ENCODE measurements at regions of chr3 and their contacts with region 1.

Region 1: GRCh38 chr3:184174646-184175492 is at the start of gene AP2M1:
- DNase-seq: peak; percentile 99 to 100
- H3K4me3 ChIP-seq: peak within 1 kb of the TSS; percentile 91
- H3K27ac ChIP-seq: peak within 1 kb of the TSS; percentile 32
- H3K4me1 ChIP-seq: peaks cover 20% of the 10 kb centered on the region
- H3K27me3 ChIP-seq: no peaks in the 10 kb centered on the region
- CTCF ChIP-seq: no peak
- total RNA-seq, gene AP2M1: 586 and 606 TPM in 2 replicates

Region 2: GRCh38 chr3:183966251-183966801 is 208.5 kb before region 1 on chr3:
- CTCF ChIA-PET with region 1: no interaction called
- POLR2A ChIA-PET with region 1: no interaction called
- intact Hi-C with region 1: loop called (anchors 2 kb)
- DNase-seq: peak; percentile 83 to 98
- H3K4me3 ChIP-seq: peak overlapping the region; percentile 27
- H3K27ac ChIP-seq: peak overlapping the region; percentile 99
- H3K4me1 ChIP-seq: peaks cover 72% of the 10 kb centered on the region
- H3K27me3 ChIP-seq: no peaks in the 10 kb centered on the region
- CTCF ChIP-seq: no peak

Region 3: DNA sequence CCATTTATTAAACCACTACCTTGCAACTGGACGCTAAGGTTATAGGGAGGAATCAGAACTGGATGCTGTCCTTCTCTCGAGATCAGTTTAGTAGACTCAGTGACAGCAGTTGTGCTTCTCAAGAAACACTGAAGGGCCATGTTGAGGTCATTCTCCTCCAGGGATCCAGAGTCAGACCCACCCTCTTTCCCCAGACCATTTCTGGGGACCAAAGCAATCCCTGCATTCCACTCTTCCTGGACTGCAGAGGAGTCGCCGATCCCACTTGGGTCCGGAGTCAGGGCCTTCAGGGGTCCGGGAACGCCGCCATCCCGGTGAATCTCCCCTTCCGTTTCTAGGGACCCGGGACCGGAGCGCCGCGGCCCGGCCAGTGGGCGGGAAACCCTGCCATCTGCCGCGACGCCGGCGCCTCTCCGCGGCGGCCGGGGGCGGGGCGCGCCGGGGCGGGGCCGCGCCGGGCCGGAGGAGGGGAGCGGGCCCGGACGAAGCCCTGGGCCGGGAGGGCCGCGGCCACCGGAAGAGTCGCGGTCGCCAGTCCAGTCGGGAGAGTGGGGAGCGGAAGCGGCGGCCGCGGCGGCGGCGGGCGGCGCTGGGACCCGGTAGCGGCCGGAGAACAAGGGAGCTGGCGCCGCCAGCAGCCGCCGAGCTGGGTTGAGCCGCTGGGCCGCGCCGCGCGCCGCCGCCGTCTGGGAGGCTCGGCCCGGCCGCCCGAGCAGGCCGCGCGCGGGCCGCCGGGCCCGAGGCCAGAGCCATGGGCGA is 19.8 kb before region 1 on chr3 and contains the start of gene DVL3:
- CTCF ChIA-PET with region 1: no interaction called
- POLR2A ChIA-PET with region 1: interaction called, 28 read pairs
- intact Hi-C with region 1: loop called (anchors 1 kb)
- DNase-seq: peak in 1 of 2 experiments; percentile 84
- H3K4me3 ChIP-seq: peak within 1 kb of the TSS; percentile 97
- H3K27ac ChIP-seq: peak within 1 kb of the TSS; percentile 63
- H3K4me1 ChIP-seq: peaks cover 26% of the 10 kb centered on the region
- H3K27me3 ChIP-seq: no peaks in the 10 kb centered on the region
- CTCF ChIP-seq: no peak
- total RNA-seq, gene DVL3: 101 and 108 TPM in 2 replicates

Region 4: DNA sequence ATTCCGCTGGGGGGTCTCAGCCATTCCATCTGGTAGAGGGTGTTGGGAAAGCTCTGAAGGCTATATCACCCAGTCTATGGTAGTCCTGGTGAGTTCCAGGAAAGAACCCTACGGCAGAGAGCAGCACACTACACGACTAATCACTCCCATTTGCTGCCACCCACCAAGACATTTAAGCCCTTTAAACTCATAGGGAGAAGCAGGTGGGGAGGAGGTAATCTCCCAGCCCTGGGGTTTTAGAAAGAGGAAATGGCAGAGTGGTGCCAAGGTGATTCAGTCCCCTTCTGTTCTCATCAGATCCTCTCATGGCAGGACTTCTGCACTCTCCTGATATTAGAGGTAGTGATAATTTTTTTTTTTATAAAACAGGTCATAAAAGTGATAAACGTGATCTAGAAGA is 43.9 kb after region 1 on chr3:
- CTCF ChIA-PET with region 1: no interaction called
- POLR2A ChIA-PET with region 1: interaction called, 10 read pairs
- intact Hi-C with region 1: no loop called
- DNase-seq: no peak
- H3K4me3 ChIP-seq: no peak overlapping the region
- H3K27ac ChIP-seq: no peak overlapping the region
- H3K4me1 ChIP-seq: no peaks in the 10 kb centered on the region
- H3K27me3 ChIP-seq: 0 out of 2 replicates have a peak, but pooled peaks cover 4% of the 10 kb centered on the region
- CTCF ChIP-seq: no peak

Region 5: DNA sequence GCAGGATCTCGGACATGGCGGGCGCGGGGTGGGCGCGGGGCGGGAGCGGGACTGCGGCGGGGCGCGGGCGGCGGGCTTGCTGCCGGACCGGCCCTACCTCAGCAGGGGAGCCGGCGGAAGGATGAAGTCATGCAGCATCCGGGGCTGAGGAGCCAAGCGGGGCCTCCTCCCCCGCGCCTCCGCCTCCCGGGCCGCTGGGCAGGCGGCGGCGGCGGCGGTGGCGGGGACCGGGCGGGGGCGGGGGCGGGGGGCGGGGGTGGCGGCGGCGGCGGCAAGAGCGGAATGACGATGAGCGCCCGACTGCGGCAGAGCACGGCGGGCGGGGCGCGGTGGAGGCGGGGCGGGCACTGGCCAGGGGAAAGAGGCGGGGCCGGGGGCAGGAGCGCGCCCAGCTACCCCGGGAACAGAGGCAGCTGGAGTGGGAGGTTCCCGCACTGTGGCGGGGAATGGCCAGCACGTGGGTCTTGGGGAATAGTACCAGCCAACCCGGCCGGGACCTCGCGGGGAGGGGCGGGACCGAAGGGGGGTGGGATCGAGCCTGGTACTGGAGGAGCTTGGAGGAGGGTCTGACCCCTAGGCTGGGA is 86.5 kb after region 1 on chr3 and contains the start of gene CAMK2N2:
- CTCF ChIA-PET with region 1: no interaction called
- POLR2A ChIA-PET with region 1: no interaction called
- intact Hi-C with region 1: no loop called
- DNase-seq: peak; percentile 78 to 82
- H3K4me3 ChIP-seq: peak within 1 kb of the TSS; percentile 93
- H3K27ac ChIP-seq: no peak within 1 kb of the TSS
- H3K4me1 ChIP-seq: peaks cover 15% of the 10 kb centered on the region; the same call in 1 of the 2 replicates
- H3K27me3 ChIP-seq: no peaks in the 10 kb centered on the region
- CTCF ChIP-seq: no peak
- total RNA-seq, gene CAMK2N2: 2.2 and 2.6 TPM in 2 replicates

Region 6: DNA sequence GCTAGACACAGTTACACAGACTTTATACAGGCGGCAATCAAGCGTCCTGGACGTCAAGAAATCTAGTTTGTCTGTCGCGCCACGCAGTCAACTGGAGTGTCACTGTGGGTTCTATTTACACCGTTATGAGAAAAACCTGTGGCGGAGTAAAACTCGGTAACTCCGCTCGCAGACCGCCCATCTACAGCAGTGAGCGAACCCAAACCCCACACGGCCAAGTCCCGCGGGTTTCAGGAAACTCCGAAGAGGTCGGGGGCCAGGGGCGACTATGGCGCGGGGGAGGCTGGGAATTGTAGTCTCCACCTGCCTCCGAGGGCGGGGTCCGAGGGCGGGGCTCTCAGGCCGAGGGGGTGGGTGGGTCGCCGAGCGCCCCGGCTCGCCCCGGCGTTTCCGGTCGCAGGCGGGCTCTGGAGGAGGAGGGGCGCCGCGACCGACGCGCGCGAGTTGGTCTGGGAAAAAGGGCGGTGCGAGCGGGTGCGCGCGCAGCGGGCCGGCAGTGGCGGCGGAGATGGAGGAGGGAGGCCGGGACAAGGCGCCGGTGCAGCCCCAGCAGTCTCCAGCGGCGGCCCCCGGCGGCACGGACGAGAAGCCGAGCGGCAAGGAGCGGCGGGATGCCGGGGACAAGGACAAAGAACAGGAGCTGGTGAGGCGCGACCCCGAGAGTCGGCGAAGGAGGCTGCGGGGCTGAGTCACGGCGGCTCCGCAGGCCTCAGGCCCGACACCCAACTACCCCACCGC is 124.1 kb after region 1 on chr3 and contains the start of gene PSMD2:
- CTCF ChIA-PET with region 1: no interaction called
- POLR2A ChIA-PET with region 1: no interaction called
- intact Hi-C with region 1: loop called (anchors 1 kb)
- DNase-seq: peak; percentile 92 to 99
- H3K4me3 ChIP-seq: peak within 1 kb of the TSS; percentile 100
- H3K27ac ChIP-seq: peak within 1 kb of the TSS; percentile 57
- H3K4me1 ChIP-seq: peaks cover 15% of the 10 kb centered on the region
- H3K27me3 ChIP-seq: no peaks in the 10 kb centered on the region
- CTCF ChIP-seq: no peak
- total RNA-seq, gene PSMD2: 521 and 788 TPM in 2 replicates

Measured in PC-9 (cell line).